K562 (cell line): ENCODE measurements at regions of chr11 and their contacts with region 1.

Region 1: GRCh38 chr11:65382033-65382807 is at the start of gene SLC25A45:
- DNase-seq: peak; percentile 86 to 96 (median 90)
- ATAC-seq: peak; percentile 93
- H3K4me3 ChIP-seq: peak within 1 kb of the TSS; percentile 37
- H3K27ac ChIP-seq: peak within 1 kb of the TSS; percentile 93
- H3K4me1 ChIP-seq: peaks cover 35 to 81% of the 10 kb centered on the region in 2 experiments
- H3K27me3 ChIP-seq: no peaks in the 10 kb centered on the region
- CTCF ChIP-seq: peak; percentile 84 to 92 (median 91)
- EP300 ChIP-seq: peak; percentile 85
- POLR2A ChIP-seq: peak; percentile 73
- RAD21 ChIP-seq: peak; percentile 93 to 95
- polyA plus RNA-seq, gene SLC25A45: 0.15 to 0.34 TPM

Region 2: DNA sequence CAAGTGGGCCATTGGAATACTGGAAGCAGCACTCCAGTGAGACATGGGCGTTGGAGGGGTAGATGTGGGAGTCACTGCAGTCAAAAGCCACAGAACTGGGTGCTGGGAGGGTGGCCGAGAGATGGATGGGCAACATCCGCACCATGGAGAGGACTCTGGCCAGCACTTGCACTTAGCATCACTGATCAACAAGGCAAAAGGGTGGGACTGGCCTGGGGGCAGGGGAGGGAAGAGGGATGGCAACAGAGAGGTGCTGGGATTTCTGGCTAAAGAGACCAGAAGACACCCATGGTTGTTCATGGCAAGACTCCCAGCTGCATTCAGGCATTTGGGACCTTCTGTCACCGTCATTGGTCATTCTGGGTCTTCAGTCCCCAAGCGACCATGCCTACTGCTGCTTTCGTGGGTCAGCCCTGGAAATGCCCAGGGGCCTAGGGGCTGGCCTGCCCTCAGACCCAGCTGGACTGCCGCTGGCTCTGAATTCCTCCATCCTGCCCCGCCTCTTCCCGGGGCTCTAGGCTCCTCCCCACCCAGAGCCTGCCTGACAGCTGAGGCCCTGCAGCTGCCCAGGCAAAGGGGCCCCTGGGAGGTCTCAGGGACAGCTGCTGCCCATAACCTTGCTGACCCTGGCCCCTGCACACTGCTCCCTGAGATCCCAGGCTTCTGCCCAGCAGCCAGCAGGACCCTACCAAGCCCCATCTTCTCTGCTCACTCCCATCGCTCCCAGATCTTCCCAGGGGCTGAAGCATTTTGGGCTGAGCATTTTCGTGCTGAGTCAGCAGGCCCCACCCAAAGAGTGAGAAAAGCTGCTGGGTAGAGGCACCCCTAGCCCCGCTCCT is 80.5 kb before region 1 on chr11:
- CTCF ChIA-PET with region 1: no interaction called
- POLR2A ChIA-PET with region 1: no interaction called
- in situ Hi-C with region 1: no loop called
- intact Hi-C with region 1: no loop called
- DNase-seq: peak; percentile 49 to 64 (median 60)
- ATAC-seq: peak; percentile 89
- H3K4me3 ChIP-seq: no peak overlapping the region
- H3K27ac ChIP-seq: peak overlapping the region; percentile 23; the same call in 1 of the 3 replicates
- H3K4me1 ChIP-seq: peaks cover 12 to 20% of the 10 kb centered on the region in 2 experiments; a peak in 4 of 5 replicates
- H3K27me3 ChIP-seq: no peaks in the 10 kb centered on the region
- CTCF ChIP-seq: no peak
- EP300 ChIP-seq: no peak
- POLR2A ChIP-seq: no peak
- RAD21 ChIP-seq: no peak

Region 3: DNA sequence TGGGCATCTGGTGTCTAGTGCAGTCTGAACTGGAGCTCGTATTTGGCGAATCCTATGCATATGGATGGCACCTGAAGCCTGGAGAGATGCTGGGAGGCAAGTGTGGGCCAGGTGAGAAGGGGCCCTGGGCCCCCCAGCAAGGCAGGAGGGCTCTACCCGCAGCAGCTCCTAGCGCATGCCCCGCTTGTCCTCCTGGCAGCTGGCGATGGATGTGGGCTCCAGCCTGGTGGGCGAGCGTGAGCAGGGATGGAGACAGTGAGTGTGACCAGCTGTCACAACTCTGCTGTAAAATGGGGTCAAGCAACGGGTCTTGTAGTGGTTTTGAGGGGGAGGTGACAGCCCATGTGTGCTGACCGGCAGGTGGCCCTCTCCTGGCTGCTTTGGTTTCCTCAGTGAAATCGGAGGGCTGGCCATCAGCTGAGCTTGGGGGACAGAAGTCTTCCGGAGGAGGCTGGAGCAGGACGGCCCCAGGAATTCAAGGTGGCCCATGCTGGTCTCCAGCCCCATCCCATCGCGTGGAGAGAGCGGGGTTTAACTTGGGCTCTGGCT is 16.2 kb after region 1 on chr11:
- CTCF ChIA-PET with region 1: no interaction called
- POLR2A ChIA-PET with region 1: interaction called, 21 read pairs
- in situ Hi-C with region 1: no loop called
- intact Hi-C with region 1: no loop called
- DNase-seq: no peak
- ATAC-seq: peak; percentile 23; the same call in 2 of the 3 replicates
- H3K4me3 ChIP-seq: no peak overlapping the region
- H3K27ac ChIP-seq: no peak overlapping the region
- H3K4me1 ChIP-seq: peaks cover 2 to 52% of the 10 kb centered on the region in 2 experiments; a peak in 4 of 5 replicates
- H3K27me3 ChIP-seq: no peaks in the 10 kb centered on the region
- CTCF ChIP-seq: peak in 2 of 3 experiments; percentile 23 to 39; a peak in 3 of 6 replicates
- EP300 ChIP-seq: no peak
- POLR2A ChIP-seq: no peak
- RAD21 ChIP-seq: no peak